RWPE1 (cell line): ENCODE measurements at regions of chr11 and their contacts with region 1.

Region 1: GRCh38 chr11:101860696-101861427 is 53.9 kb upstream of the CEP126 start:
- DNase-seq: peak; percentile 71
- H3K27ac ChIP-seq: no peak overlapping the region
- CTCF ChIP-seq: peak; percentile 83

Region 2: DNA sequence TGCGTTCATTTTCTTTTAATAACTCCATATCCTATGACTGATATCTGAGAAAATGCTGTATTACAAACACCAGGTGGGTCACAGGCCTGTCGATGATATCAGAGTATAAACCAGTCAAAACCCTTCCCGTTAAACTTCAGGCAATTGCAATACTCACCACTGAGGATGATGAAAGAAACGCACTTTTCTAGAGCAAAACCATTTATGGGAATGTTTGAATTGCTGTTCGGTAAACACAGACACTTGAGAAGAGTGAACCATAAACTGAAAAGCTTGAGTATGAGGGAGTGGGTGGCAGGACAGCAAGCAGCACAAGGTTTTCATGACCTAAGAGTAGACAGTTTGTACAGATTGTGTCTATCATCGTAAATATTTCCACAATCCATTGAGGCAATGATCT is 85.8 kb before region 1 on chr11:
- CTCF ChIA-PET with region 1: no interaction called
- POLR2A ChIA-PET with region 1: no interaction called
- DNase-seq: no peak
- H3K27ac ChIP-seq: no peak overlapping the region
- CTCF ChIP-seq: no peak

Region 3: GRCh38 chr11:102007567-102008437 is 146.9 kb after region 1 on chr11:
- CTCF ChIA-PET with region 1: interaction called, 30 read pairs
- POLR2A ChIA-PET with region 1: no interaction called
- DNase-seq: peak; percentile 42
- H3K27ac ChIP-seq: no peak overlapping the region
- CTCF ChIP-seq: peak; percentile 54